AG04450 (cell line): ENCODE measurements at regions of chr2 and their contacts with region 1.

Region 1: GRCh38 chr2:159098815-159099455 is 130.5 kb downstream of the TANC1 start:
- DNase-seq: no peak
- H3K4me3 ChIP-seq: no peak overlapping the region
- H3K27ac ChIP-seq: no peak overlapping the region
- H3K27me3 ChIP-seq: no peaks in the 10 kb centered on the region
- CTCF ChIP-seq: no peak

Region 2: DNA sequence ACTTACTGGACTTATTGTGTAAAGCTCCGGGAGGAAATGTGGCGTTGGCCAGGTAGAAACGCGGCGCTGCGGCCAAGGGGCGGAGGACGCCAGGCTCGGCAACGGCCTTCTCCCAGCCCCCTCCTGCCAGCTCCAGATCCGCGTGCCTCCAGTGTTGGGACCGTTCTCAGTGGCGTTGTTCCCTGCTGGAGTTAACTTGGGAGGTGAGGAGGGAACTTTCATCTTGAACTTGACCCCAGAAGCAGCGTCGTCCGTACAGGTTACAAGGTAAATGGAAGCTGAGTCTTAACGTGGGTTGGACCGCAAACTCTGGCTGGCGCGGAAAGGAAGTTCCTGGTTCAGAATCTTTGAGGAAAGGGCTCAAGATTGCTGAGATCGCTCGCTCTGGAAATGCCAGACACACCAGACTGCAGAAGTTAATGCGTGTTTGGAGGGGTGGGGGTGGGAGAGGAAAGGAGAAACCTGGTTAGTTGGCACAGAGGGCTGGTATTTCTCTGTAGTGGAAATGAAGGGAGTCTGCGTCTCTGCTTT is 129.2 kb before region 1 on chr2:
- CTCF ChIA-PET with region 1: no interaction called
- POLR2A ChIA-PET with region 1: interaction called, 11 read pairs
- DNase-seq: no peak
- H3K4me3 ChIP-seq: peak overlapping the region; percentile 83
- H3K27ac ChIP-seq: no peak overlapping the region
- H3K27me3 ChIP-seq: no peaks in the 10 kb centered on the region
- CTCF ChIP-seq: no peak

Region 3: GRCh38 chr2:159111346-159111924 is 12.5 kb after region 1 on chr2:
- CTCF ChIA-PET with region 1: no interaction called
- POLR2A ChIA-PET with region 1: interaction called, 10 read pairs
- DNase-seq: no peak
- H3K4me3 ChIP-seq: no peak overlapping the region
- H3K27ac ChIP-seq: no peak overlapping the region
- H3K27me3 ChIP-seq: no peaks in the 10 kb centered on the region
- CTCF ChIP-seq: no peak

Region 4: GRCh38 chr2:159157361-159158209 is 58.6 kb after region 1 on chr2:
- CTCF ChIA-PET with region 1: no interaction called
- POLR2A ChIA-PET with region 1: no interaction called
- DNase-seq: no peak
- H3K4me3 ChIP-seq: no peak overlapping the region
- H3K27ac ChIP-seq: no peak overlapping the region
- H3K27me3 ChIP-seq: no peaks in the 10 kb centered on the region
- CTCF ChIP-seq: no peak

Region 5: GRCh38 chr2:159201360-159202063 is 102.6 kb after region 1 on chr2:
- CTCF ChIA-PET with region 1: no interaction called
- POLR2A ChIA-PET with region 1: no interaction called
- DNase-seq: peak; percentile 13
- H3K4me3 ChIP-seq: no peak overlapping the region
- H3K27ac ChIP-seq: peak overlapping the region; percentile 87
- H3K27me3 ChIP-seq: no peaks in the 10 kb centered on the region
- CTCF ChIP-seq: no peak